ENCODE measurements at regions of chr13 and their contacts with region 1.

Region 1: GRCh38 chr13:49247643-49248621 is at the start of gene CDADC1:
- DNase-seq: peak; percentile 98
- ATAC-seq: peak; percentile 99
- total RNA-seq, gene CDADC1: 10.4 TPM

Region 2: DNA sequence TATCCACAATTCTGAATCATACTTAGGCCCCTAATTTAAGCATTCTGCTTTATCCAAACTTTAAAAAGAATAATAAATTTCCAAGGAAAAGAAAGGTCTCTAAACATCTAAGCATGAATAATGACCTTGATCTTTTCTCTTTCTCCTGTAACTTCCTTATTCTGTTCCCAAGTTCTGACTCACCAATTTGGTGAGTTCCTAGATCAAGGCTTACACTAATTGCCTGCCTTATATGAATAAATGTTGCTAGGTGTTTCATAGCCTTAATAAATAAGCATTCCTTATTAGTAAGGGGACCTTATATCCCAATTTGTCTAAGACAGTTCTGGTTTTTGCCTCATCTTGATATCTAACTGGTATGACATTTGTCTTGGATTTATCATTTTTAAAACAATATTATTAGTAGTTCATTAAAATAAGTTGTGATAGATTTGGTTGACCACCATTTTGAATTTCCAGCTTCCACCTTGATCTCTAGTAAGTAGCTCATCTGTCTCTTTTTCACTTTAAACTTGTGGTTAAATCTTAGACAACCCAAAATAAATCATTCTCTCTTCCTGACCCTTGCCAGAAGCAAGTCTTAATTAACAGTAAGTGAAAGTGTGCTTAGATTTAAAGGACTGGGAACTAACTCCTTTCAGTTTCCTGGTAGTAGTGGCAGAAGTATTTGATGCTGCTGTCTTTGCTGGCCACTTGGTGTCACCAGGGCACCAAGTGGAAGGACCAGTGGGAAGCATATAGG is 149.0 kb before region 1 on chr13:
- intact Hi-C with region 1: loop called (anchors 10 kb)
- DNase-seq: no peak
- ATAC-seq: peak; percentile 67

Region 3: DNA sequence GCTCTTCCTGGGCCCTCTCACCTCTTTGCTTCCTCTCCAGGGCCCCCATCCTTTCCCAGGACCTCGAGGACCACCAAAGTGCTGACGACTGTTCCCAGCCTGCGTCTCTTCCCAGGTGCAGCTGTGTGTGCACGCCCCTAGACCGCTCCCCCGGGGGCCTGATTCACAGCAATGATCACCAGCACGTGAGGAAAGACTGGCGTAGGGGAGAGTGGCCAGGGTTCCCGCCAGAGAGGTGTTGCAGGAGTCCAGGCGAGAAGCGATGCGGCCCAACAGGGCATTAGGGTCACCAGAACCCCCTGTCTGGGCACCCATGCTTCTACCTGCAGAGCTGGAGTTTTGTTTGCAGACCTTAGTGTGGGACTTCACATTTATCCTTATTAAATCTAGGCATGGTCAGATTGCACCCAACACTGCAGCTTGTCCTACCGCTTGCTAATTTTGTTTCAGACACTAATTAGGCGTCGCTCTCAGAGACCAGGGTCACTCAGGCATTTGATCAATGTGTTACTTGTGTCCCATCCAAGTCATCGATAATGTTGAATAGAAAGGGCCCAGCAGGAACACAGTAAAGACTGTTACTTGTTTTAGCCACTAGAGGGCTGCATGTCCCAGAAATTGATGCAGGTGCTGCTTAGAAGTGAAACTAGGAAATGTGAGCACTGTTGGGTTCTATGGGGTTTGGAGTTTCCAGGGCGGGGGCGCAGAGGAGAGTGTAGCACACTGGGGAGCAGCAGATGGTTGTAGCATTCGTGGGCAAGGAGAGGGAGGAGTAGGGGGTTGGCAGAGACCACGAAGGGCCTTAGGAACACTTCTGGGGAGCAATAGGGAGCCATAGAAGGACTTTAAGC is 53.0 kb after region 1 on chr13:
- intact Hi-C with region 1: no loop called
- DNase-seq: peak; percentile 50
- ATAC-seq: peak; percentile 69

Measured in left ventricle myocardium superior (tissue), 1 donor.